Left colon (tissue), 2 donors: ENCODE measurements at regions of chr2 and their contacts with region 1.

Region 1: GRCh38 chr2:121717529-121717928 is 19.1 kb downstream of the NIFK start:
- DNase-seq: no peak
- ATAC-seq: no peak

Region 2: DNA sequence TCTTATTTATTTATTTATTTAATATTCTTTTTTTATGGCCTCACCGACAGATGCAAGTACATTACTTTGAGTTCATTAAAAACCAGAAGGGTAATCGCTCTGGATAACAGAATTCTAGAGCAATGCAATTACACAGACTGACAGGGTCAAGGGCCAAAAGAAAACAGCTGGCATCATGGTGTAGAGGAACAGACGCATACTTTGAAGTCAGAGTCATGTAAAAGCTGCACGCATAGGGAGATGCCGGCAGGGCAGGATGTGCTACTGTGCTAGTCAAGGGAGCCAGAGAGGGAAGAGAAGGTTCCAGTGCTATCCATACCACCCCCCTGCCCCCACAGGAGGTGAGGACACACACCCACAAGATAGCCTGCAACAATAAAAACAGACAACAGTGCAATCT is 317.3 kb before region 1 on chr2:
- intact Hi-C with region 1: loop called in 1 of 2 experiments (anchors 5 kb)
- DNase-seq: no peak
- ATAC-seq: no peak